Posterior cingulate gyrus (tissue), 11 donors: ENCODE measurements at regions of chr22 and their contacts with region 1.

Region 1: GRCh38 chr22:36986242-36986821 is 32.9 kb downstream of the TST start:
- DNase-seq: no peak

Region 2: DNA sequence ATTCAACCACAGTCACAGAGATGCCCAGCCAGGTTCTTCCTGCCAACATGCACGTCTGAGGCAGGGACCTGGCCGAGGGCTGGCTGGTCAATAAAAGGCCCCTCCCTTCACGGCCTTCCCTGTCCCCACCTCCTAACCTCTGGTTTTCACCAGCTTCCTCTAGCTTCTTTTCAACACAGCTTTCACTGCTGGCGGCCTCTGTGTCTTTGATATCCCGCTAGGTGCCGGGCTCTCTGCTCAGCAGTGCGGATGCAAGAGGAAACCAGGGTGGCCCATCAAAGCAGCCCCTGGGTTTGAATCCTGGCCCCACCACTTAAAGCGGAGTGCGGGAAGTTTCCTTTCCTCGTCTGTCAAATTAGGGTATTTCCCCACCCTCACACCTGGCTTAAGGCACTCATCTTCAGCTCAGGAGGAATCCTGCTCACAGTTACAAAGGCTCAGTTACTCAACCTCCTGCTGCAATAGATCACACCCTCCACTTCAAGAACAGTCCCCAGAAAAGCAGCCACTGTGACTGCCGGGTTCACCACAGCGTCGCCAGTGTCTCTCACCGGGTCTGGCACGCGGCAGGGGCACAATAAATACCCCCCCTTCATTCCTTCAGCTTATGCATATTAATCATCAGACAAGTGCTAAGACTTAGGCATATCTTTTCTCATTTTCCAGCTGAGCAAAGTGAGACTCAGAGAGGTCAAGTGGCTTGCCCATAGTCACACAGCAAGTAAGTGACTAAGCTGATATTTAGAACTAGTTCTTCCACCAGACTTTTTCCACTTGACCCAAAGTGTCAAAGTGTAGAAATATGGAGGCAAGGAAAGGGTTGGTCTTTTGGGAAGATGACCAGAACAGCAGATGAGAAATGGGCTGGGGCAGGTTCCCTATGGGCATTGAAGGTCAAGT is 550.6 kb before region 1 on chr22:
- intact Hi-C with region 1: no loop called
- DNase-seq: no peak

Region 3: GRCh38 chr22:36954211-36954891 is 32.0 kb before region 1 on chr22:
- intact Hi-C with region 1: no loop called
- DNase-seq: peak in 2 of 10 donors; percentile 29 to 56

Region 4: GRCh38 chr22:37002633-37003032 is 16.3 kb after region 1 on chr22:
- intact Hi-C with region 1: loop called (anchors 2 kb)
- DNase-seq: peak in 8 of 10 donors; percentile 49 to 93 (median 66)